MCF 10A (cell line): ENCODE measurements at regions of chr16 and their contacts with region 1.

Region 1: GRCh38 chr16:28924732-28925385 is at the start of gene RABEP2:
- DNase-seq: peak; percentile 95
- H3K4me3 Mint-ChIP-seq: peak within 1 kb of the TSS; percentile 85
- H3K27ac Mint-ChIP-seq: peak within 1 kb of the TSS; percentile 76
- H3K4me1 Mint-ChIP-seq: peaks cover 15% of the 10 kb centered on the region
- H3K27me3 Mint-ChIP-seq: no peaks in the 10 kb centered on the region
- CTCF ChIP-seq: no peak
- total RNA-seq, gene RABEP2: 10.7 and 17.8 TPM in 2 replicates

Region 2: GRCh38 chr16:28846080-28846932 is 78.6 kb before region 1 on chr16 and contains the start of gene TUFM:
- CTCF ChIA-PET with region 1: no interaction called
- POLR2A ChIA-PET with region 1: interaction called, 18 read pairs
- intact Hi-C with region 1: no loop called
- DNase-seq: peak; percentile 97
- H3K4me3 Mint-ChIP-seq: peak within 1 kb of the TSS; percentile 99
- H3K27ac Mint-ChIP-seq: peak within 1 kb of the TSS; percentile 99
- H3K4me1 Mint-ChIP-seq: peaks cover 7% of the 10 kb centered on the region
- H3K27me3 Mint-ChIP-seq: no peaks in the 10 kb centered on the region
- CTCF ChIP-seq: peak; percentile 39
- total RNA-seq, gene TUFM: 184 and 198 TPM in 2 replicates